Tibial artery (tissue), 4 donors: ENCODE measurements at regions of chr19 and their contacts with region 1.

Region 1: GRCh38 chr19:56140583-56141416 is at the start of gene ZNF444:
- DNase-seq: peak; percentile 99 to 100
- H3K4me3 ChIP-seq: peak within 1 kb of the TSS; percentile 60 to 70
- H3K27ac ChIP-seq: peak within 1 kb of the TSS; percentile 89 to 95
- H3K4me1 ChIP-seq: peaks cover 0 to 34% (median 18%) of the 10 kb centered on the region in 4 donors
- H3K27me3 ChIP-seq: no peaks in the 10 kb centered on the region
- CTCF ChIP-seq: no peak

Region 2: DNA sequence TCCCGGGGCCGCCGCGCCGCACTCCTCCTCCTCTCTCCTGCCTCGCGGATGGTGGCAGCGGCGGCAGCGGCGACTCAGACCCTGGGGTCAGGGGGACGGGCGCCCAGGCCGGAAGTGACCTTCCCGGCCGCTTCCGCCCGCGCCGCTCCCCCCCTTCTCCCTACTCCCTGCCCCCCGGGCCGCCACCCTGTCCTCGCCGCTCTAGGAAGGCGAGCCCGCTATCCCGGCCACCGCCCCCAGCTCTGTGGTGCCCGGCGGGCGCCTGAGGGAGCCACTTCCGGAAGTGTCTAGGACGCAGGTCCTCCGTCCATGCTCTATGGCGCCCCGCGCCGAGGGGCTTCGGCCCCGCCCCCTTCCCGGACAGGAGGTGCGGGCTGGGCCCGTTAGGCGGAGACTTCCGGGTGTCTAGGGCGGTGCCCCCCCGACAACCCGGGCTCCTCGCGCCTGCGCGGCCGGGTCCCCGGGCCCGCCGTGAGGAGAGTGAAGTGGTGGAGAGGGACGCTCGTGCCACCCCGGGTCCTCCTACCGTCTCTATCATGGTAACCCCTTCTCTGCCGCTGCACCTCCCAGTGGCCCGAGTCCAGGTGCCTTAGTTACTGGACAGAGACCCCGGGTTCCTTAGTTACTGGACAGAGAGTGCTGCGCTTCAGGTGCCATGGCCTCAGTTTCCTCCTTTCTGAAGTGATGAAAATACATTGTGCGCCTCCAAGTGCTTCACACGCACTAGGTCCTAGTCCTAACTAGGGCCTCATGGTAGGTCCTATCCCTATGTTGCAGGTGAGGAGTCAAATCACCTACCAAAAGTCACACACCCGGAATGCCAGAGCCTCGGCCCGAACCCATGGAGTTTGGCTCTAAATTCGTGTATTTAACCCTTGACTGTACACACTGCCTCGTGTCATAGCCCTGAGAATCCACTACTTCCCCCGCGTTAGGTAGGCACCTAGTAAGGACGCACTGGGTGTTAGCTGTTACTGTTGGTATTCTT is 19.3 kb before region 1 on chr19 and contains the start of gene ZNF787:
- intact Hi-C with region 1: loop called (anchors 2 kb)
- DNase-seq: peak; percentile 98 to 99
- H3K4me3 ChIP-seq: peak within 1 kb of the TSS; percentile 94 to 96
- H3K27ac ChIP-seq: peak within 1 kb of the TSS; percentile 78 to 93
- H3K4me1 ChIP-seq: peaks cover 0 to 43% (median 33%) of the 10 kb centered on the region in 4 donors
- H3K27me3 ChIP-seq: no peaks in the 10 kb centered on the region
- CTCF ChIP-seq: no peak

Region 3: DNA sequence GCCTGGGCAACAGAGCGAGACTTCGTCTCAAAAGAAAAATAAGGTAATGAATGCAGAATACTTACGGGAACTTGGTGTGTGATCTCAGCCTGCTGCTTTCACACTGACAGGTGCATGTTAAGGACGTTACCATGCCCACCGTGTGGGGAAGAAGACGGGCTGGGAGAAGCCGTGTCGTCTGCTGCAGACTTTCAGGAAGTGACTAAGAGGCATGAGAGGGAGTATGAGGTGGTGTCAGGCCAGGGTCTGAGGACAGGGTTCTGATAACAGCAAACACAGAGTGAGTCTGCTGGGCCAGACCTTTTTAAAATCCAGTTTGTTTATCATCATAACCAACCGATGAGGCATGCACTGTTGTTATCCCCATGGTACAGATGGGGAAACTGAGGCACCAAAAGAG is 21.5 kb after region 1 on chr19:
- intact Hi-C with region 1: no loop called
- DNase-seq: no peak
- H3K4me3 ChIP-seq: no peak overlapping the region
- H3K27ac ChIP-seq: no peak overlapping the region
- H3K4me1 ChIP-seq: no peaks in the 10 kb centered on the region
- H3K27me3 ChIP-seq: no peaks in the 10 kb centered on the region
- CTCF ChIP-seq: no peak